ENCODE measurements at regions of chr3 and their contacts with region 1.

Region 1: GRCh38 chr3:148991194-148992026 is at the start of gene GYG1:
- DNase-seq: peak; percentile 76
- H3K4me3 Mint-ChIP-seq: peak within 1 kb of the TSS; percentile 88
- H3K27ac Mint-ChIP-seq: peak within 1 kb of the TSS; percentile 84
- H3K4me1 Mint-ChIP-seq: peaks cover 39% of the 10 kb centered on the region
- H3K27me3 Mint-ChIP-seq: peaks cover 2% of the 10 kb centered on the region
- total RNA-seq, gene GYG1: 33.6 and 34.1 TPM in 2 replicates

Region 2: DNA sequence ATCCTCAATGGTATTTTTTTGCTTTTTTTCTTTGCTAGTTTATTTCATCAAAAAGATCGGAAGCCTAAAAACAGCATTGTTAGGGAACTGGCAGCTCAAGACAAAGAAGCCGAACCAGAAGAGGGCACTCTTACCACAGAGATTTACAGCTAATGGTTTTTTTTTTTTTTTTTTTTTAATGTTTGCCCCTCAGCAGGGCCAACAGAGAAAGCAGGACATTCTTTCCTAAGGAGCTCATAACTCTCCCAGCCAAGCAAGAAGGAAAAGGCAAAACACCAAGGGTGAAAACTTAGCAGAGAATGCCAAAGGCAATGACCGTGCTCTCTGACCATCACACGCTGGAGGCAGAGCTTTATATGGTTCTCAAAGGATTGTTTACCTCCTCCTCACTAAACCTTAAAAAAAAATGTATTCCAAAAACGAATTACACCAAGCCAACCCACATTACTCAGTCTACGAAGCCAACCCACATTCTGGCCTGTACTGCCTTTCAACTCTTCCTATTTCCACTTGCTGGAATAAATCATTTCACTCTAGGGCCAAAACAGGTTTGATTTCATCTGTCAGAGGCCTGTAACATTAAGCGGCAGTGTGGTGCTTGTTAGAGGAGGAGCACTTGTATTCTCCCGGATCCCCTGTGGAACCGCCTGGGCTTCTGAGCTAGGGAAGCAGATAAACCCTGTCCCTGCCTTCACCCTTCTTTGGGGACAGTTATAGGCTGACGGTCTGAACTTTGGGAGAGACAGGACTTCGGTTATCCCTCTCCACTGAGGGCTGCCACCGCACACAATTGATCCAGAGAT is 35.7 kb before region 1 on chr3:
- intact Hi-C with region 1: no loop called
- DNase-seq: no peak
- H3K4me3 Mint-ChIP-seq: no peak overlapping the region
- H3K27ac Mint-ChIP-seq: no peak overlapping the region
- H3K4me1 Mint-ChIP-seq: peaks cover 10% of the 10 kb centered on the region
- H3K27me3 Mint-ChIP-seq: peaks cover 18% of the 10 kb centered on the region

Region 3: GRCh38 chr3:149009732-149010131 is 18.3 kb after region 1 on chr3:
- intact Hi-C with region 1: loop called (anchors 1 kb)
- DNase-seq: peak; percentile 47
- H3K4me3 Mint-ChIP-seq: no peak overlapping the region
- H3K27ac Mint-ChIP-seq: peak overlapping the region; percentile 71
- H3K4me1 Mint-ChIP-seq: peaks cover 36% of the 10 kb centered on the region
- H3K27me3 Mint-ChIP-seq: no peaks in the 10 kb centered on the region

Region 4: GRCh38 chr3:149086232-149086988 is 95.0 kb after region 1 on chr3 and contains the start of gene HLTF:
- intact Hi-C with region 1: loop called (anchors 1 kb)
- DNase-seq: peak; percentile 87
- H3K4me3 Mint-ChIP-seq: peak within 1 kb of the TSS; percentile 90
- H3K27ac Mint-ChIP-seq: peak within 1 kb of the TSS; percentile 87
- H3K4me1 Mint-ChIP-seq: peaks cover 27% of the 10 kb centered on the region
- H3K27me3 Mint-ChIP-seq: no peaks in the 10 kb centered on the region
- total RNA-seq, gene HLTF: 19.7 and 22.6 TPM in 2 replicates

Region 5: DNA sequence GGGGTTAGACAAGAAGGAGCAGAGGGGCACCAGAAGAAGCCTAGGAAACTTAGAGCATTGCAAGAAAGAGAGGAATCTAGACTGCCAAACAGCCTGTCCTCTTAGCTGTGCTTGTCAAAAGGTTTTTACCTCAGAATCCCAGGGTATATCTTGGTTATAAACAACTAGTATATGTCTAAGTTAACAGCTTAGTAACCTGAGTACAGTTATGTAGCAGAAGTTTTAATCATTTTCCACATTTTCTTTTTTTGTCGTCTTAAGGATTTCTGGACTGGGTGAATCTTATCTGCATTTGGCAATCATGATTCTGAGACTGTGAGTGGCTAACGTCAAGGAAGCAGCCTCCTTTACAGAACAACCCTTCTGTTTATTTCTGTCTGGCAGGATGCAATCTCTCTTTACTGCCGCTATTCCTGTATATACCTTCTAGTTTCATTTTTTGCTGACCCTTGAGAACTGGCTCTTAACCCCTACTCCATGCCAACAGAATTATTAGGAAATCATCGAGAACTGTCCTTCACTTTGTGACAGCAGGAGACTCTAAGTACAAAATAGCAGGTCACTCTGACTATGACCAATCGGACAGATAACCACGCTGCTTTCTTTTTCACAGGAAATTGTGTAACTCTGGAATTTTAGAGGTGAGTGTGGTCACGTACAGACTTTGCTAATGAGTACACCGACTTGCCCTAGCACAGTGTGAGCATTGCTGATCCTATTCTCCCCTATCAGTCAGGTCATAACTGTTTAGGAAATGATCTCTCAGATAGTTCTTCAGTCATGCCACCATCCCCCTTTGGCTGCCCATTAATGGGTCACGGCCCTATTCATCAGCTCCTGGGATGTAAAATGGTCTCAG is 233.6 kb after region 1 on chr3:
- intact Hi-C with region 1: loop called (anchors 5 kb)
- DNase-seq: peak; percentile 46
- H3K4me3 Mint-ChIP-seq: peak overlapping the region; percentile 78
- H3K27ac Mint-ChIP-seq: peak overlapping the region; percentile 89
- H3K4me1 Mint-ChIP-seq: peaks cover 30% of the 10 kb centered on the region
- H3K27me3 Mint-ChIP-seq: peaks cover 2% of the 10 kb centered on the region

Region 6: GRCh38 chr3:149752051-149752787 is 760.8 kb after region 1 on chr3 and contains the start of gene COMMD2:
- intact Hi-C with region 1: loop called (anchors 5 kb)
- DNase-seq: peak; percentile 65
- H3K4me3 Mint-ChIP-seq: peak within 1 kb of the TSS; percentile 95
- H3K27ac Mint-ChIP-seq: peak within 1 kb of the TSS; percentile 59
- H3K4me1 Mint-ChIP-seq: peaks cover 14% of the 10 kb centered on the region
- H3K27me3 Mint-ChIP-seq: peaks cover 4% of the 10 kb centered on the region
- total RNA-seq, gene COMMD2: 44.2 and 44.8 TPM in 2 replicates